ENCODE measurements at regions of chr6 and their contacts with region 1.

Region 1: GRCh38 chr6:52049252-52050050 is 38.0 kb downstream of the PKHD1 start:
- DNase-seq: no peak
- ATAC-seq: peak; percentile 30
- H3K4me3 Mint-ChIP-seq: no peak overlapping the region
- H3K27ac Mint-ChIP-seq: no peak overlapping the region
- H3K4me1 Mint-ChIP-seq: no peaks in the 10 kb centered on the region
- H3K27me3 Mint-ChIP-seq: peaks cover 18% of the 10 kb centered on the region
- CTCF ChIP-seq: peak; percentile 66

Region 2: GRCh38 chr6:51163804-51164529 is 885.5 kb before region 1 on chr6:
- CTCF ChIA-PET with region 1: no interaction called
- POLR2A ChIA-PET with region 1: no interaction called
- intact Hi-C with region 1: no loop called
- DNase-seq: no peak
- ATAC-seq: no peak
- H3K4me3 Mint-ChIP-seq: no peak overlapping the region
- H3K27ac Mint-ChIP-seq: no peak overlapping the region
- H3K4me1 Mint-ChIP-seq: no peaks in the 10 kb centered on the region
- H3K27me3 Mint-ChIP-seq: no peaks in the 10 kb centered on the region
- CTCF ChIP-seq: no peak

Region 3: DNA sequence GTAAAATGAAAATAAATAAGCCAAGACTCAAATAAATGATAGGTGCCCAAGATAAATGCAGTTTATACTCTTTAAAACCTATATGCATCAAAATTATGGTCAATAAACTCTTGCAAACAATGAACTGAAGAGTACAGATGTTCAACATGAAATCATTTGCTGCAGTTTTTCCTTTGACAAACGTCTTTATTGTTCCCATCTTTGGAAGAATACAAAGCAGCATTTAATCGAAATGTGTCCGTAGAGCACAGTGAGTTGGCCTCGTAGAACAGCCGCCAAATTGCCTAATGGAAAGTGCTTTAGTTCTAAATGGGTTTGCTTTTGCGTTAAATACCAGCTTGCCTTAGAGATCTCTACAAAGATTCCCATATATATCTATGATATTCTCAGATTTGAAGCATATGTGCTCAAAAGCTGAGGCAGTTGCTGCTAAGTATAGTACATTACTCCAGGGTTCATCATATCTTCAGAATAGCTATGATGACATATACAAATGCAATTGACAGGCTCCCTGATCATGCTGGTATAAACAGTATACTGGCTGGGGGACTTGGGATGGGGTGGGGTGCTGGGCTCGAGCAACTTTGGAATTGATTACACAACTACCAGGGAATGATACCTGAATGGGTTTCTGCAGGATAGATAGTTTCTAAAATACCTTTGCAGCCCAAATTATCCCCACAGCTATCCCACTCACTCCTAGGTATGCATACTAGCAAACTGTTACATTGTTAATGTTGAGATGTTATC is 409.3 kb before region 1 on chr6:
- CTCF ChIA-PET with region 1: no interaction called
- POLR2A ChIA-PET with region 1: no interaction called
- intact Hi-C with region 1: no loop called
- DNase-seq: no peak
- ATAC-seq: no peak
- H3K4me3 Mint-ChIP-seq: no peak overlapping the region
- H3K27ac Mint-ChIP-seq: no peak overlapping the region
- H3K4me1 Mint-ChIP-seq: no peaks in the 10 kb centered on the region
- H3K27me3 Mint-ChIP-seq: no peaks in the 10 kb centered on the region
- CTCF ChIP-seq: no peak

Region 4: DNA sequence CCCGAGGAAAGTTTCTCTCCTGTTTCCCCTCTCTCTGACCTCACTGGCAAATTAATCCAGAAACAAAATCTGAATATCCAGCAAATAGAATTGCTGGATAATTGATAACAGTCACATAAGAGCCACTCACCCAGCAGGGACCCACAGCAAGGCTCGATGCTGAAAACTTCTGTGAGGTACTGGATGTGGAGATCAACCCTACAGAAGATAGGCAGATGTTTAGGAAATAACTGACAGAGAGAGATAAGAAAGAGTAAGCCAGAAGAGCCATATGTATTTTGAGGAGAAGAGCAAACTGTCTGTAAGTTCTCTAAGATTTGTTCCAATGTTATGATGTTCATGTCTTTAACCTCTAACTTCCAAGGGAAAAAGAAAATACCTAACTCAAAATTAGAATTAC is 21.8 kb before region 1 on chr6:
- CTCF ChIA-PET with region 1: interaction called, 19 read pairs
- POLR2A ChIA-PET with region 1: no interaction called
- intact Hi-C with region 1: no loop called
- DNase-seq: no peak
- ATAC-seq: no peak
- H3K4me3 Mint-ChIP-seq: no peak overlapping the region
- H3K27ac Mint-ChIP-seq: no peak overlapping the region
- H3K4me1 Mint-ChIP-seq: no peaks in the 10 kb centered on the region
- H3K27me3 Mint-ChIP-seq: peaks cover 5% of the 10 kb centered on the region
- CTCF ChIP-seq: no peak

Measured in activated CD8-positive, alpha-beta T cell treated with anti-CD3 and anti-CD28 coated beads for 36 hours (primary cell).